ENCODE measurements at regions of chr3 and their contacts with region 1.

Region 1: DNA sequence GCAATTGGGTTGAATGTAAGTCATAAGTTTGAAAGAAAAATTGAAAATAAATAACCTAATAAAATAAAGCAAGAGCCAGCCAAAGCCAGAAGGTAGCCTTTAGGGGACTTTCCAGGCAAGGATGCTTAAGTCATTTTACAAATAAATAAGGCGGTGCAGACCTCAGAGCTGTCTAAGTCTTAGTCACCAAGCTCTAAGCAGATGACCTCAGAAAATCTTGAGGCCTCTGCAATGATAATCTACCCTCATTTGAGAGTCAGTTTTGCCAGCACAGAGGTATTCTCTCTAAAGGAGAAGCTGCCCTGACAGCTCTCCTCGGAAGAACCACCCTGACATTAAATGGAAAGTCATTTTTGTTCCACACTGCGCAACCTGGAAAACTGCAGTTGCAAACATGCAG is 113.9 kb downstream of the OXNAD1 start:
- DNase-seq: peak; percentile 44
- H3K4me3 Mint-ChIP-seq: no peak overlapping the region
- H3K27ac Mint-ChIP-seq: peak overlapping the region; percentile 80
- H3K4me1 Mint-ChIP-seq: peaks cover 82% of the 10 kb centered on the region
- H3K27me3 Mint-ChIP-seq: no peaks in the 10 kb centered on the region

Region 2: GRCh38 chr3:15319575-15319974 is 1059.3 kb before region 1 on chr3:
- CTCF ChIA-PET with region 1: no interaction called
- intact Hi-C with region 1: loop called (anchors 10 kb)
- DNase-seq: no peak
- H3K4me3 Mint-ChIP-seq: no peak overlapping the region
- H3K27ac Mint-ChIP-seq: no peak overlapping the region
- H3K4me1 Mint-ChIP-seq: peaks cover 60% of the 10 kb centered on the region
- H3K27me3 Mint-ChIP-seq: no peaks in the 10 kb centered on the region

Region 3: GRCh38 chr3:16338999-16339398 is 39.9 kb before region 1 on chr3:
- CTCF ChIA-PET with region 1: interaction called, 3 read pairs
- intact Hi-C with region 1: loop called (anchors 2 kb)
- DNase-seq: peak; percentile 36
- H3K4me3 Mint-ChIP-seq: no peak overlapping the region
- H3K27ac Mint-ChIP-seq: peak overlapping the region; percentile 73
- H3K4me1 Mint-ChIP-seq: peaks cover 67% of the 10 kb centered on the region
- H3K27me3 Mint-ChIP-seq: no peaks in the 10 kb centered on the region

Region 4: GRCh38 chr3:16647668-16648067 is 268.7 kb after region 1 on chr3:
- CTCF ChIA-PET with region 1: no interaction called
- intact Hi-C with region 1: no loop called
- DNase-seq: no peak
- H3K4me3 Mint-ChIP-seq: no peak overlapping the region
- H3K27ac Mint-ChIP-seq: no peak overlapping the region
- H3K4me1 Mint-ChIP-seq: no peaks in the 10 kb centered on the region
- H3K27me3 Mint-ChIP-seq: no peaks in the 10 kb centered on the region